Gastrocnemius medialis (tissue), 4 donors: ENCODE measurements at regions of chr17 and their contacts with region 1.

Region 1: DNA sequence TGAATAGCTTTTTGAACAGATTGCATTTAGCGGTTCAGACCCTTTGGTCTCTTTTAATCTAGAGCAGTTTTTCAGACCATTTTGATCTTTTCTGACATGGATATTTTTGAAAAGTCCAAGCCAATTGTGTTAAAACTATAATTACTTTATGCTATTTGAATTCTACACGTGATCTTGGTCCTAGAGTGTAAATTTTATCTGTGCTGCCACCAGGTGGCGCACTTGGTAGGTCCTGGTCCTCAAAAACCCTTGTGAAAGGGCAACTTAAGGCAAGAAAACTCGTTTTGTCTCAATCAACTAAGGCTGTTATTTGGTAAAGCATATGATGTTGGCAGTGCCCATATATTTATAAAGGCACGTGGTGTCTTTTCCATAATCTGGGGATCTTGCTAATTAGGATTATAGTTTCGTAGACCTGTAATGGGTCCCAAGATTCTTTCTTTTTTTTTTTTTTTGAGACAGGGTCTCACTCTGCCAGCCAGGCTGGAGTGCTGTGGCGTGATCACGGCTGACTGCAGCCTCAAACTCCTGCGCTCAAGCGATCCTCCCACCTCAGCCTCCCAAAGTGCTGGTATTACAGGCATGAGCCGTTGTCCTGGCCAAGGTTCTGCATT is 43.9 kb upstream of the TEX2 start:
- DNase-seq: peak in 1 of 2 donors; percentile 45
- ATAC-seq: peak in 1 of 2 donors; percentile 55
- H3K4me3 ChIP-seq: no peak overlapping the region
- H3K27ac ChIP-seq: no peak overlapping the region
- H3K4me1 ChIP-seq: peaks cover 0 to 3% of the 10 kb centered on the region in 2 donors
- H3K27me3 ChIP-seq: no peaks in the 10 kb centered on the region
- CTCF ChIP-seq: peak; percentile 67 to 82 (median 71)
- POLR2A ChIP-seq: no peak

Region 2: GRCh38 chr17:64411999-64412771 is 105.2 kb after region 1 on chr17:
- in situ Hi-C with region 1: no loop called
- intact Hi-C with region 1: loop called (anchors 2 kb)
- DNase-seq: peak; percentile 18 to 45
- ATAC-seq: peak; percentile 67 to 74
- H3K4me3 ChIP-seq: peak overlapping the region in 2 of 4 donors; percentile 6 to 15
- H3K27ac ChIP-seq: peak overlapping the region; percentile 33 to 65 (median 50)
- H3K4me1 ChIP-seq: peaks cover 0 to 8% of the 10 kb centered on the region in 2 donors
- H3K27me3 ChIP-seq: no peaks in the 10 kb centered on the region
- CTCF ChIP-seq: no peak
- POLR2A ChIP-seq: no peak